ENCODE measurements at regions of chr1 and their contacts with region 1.

Region 1: GRCh38 chr1:32981003-32981901 is 16.6 kb upstream of the RNF19B start:
- DNase-seq: peak; percentile 96
- ATAC-seq: peak; percentile 99
- H3K4me3 ChIP-seq: peak overlapping the region; percentile 20; the same call in 1 of the 2 replicates
- H3K27ac ChIP-seq: peak overlapping the region; percentile 93
- H3K4me1 ChIP-seq: peaks cover 17% of the 10 kb centered on the region
- H3K27me3 ChIP-seq: no peaks in the 10 kb centered on the region
- CTCF ChIP-seq: no peak

Region 2: GRCh38 chr1:32925403-32926162 is 55.7 kb before region 1 on chr1:
- CTCF ChIA-PET with region 1: no interaction called
- POLR2A ChIA-PET with region 1: no interaction called
- intact Hi-C with region 1: no loop called
- DNase-seq: no peak
- ATAC-seq: no peak
- H3K4me3 ChIP-seq: no peak overlapping the region
- H3K27ac ChIP-seq: no peak overlapping the region
- H3K4me1 ChIP-seq: no peaks in the 10 kb centered on the region
- H3K27me3 ChIP-seq: no peaks in the 10 kb centered on the region
- CTCF ChIP-seq: no peak

Region 3: DNA sequence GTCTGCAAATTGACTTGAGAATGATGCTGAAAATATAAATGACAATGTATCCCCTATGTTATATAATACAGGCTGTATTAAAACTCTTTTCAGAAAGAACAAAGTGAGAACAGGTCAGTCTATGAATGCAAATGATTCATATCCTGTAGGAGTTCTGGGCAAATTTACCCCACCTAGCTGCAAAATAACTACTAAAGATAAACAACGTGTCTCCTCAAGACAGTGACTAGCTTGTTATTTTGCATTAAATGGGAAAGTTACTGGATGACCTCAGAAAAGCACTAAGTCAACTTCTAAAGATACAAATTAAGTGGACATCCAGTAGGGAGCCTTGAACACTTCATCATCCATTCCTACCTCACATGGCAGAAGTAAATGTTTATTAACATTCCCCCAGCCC is 27.8 kb before region 1 on chr1:
- CTCF ChIA-PET with region 1: interaction called, 3 read pairs
- POLR2A ChIA-PET with region 1: interaction called, 4 read pairs
- intact Hi-C with region 1: loop called (anchors 1 kb)
- DNase-seq: peak; percentile 91
- ATAC-seq: peak; percentile 86
- H3K4me3 ChIP-seq: peak overlapping the region; percentile 3; the same call in 1 of the 2 replicates
- H3K27ac ChIP-seq: peak overlapping the region; percentile 93
- H3K4me1 ChIP-seq: peaks cover 38% of the 10 kb centered on the region
- H3K27me3 ChIP-seq: no peaks in the 10 kb centered on the region
- CTCF ChIP-seq: no peak

Region 4: GRCh38 chr1:32964461-32965250 is 16.6 kb before region 1 on chr1 and contains the start of gene RNF19B:
- CTCF ChIA-PET with region 1: interaction called, 3 read pairs
- POLR2A ChIA-PET with region 1: interaction called, 20 read pairs
- intact Hi-C with region 1: loop called (anchors 2 kb)
- DNase-seq: peak; percentile 95
- ATAC-seq: peak; percentile 91
- H3K4me3 ChIP-seq: peak within 1 kb of the TSS; percentile 98
- H3K27ac ChIP-seq: peak within 1 kb of the TSS; percentile 46
- H3K4me1 ChIP-seq: peaks cover 32% of the 10 kb centered on the region
- H3K27me3 ChIP-seq: no peaks in the 10 kb centered on the region
- CTCF ChIP-seq: no peak
- total RNA-seq, gene RNF19B: 17.9 and 21.3 TPM in 2 replicates

Region 5: GRCh38 chr1:33007190-33008050 is 26.2 kb after region 1 on chr1:
- CTCF ChIA-PET with region 1: no interaction called
- POLR2A ChIA-PET with region 1: no interaction called
- intact Hi-C with region 1: loop called (anchors 1 kb)
- DNase-seq: peak; percentile 93
- ATAC-seq: peak; percentile 97
- H3K4me3 ChIP-seq: no peak overlapping the region
- H3K27ac ChIP-seq: peak overlapping the region; percentile 28
- H3K4me1 ChIP-seq: peaks cover 40% of the 10 kb centered on the region
- H3K27me3 ChIP-seq: no peaks in the 10 kb centered on the region
- CTCF ChIP-seq: peak; percentile 86